Naive thymus-derived CD4-positive, alpha-beta T cell (primary cell): ENCODE measurements at regions of chr1 and their contacts with region 1.

Region 1: DNA sequence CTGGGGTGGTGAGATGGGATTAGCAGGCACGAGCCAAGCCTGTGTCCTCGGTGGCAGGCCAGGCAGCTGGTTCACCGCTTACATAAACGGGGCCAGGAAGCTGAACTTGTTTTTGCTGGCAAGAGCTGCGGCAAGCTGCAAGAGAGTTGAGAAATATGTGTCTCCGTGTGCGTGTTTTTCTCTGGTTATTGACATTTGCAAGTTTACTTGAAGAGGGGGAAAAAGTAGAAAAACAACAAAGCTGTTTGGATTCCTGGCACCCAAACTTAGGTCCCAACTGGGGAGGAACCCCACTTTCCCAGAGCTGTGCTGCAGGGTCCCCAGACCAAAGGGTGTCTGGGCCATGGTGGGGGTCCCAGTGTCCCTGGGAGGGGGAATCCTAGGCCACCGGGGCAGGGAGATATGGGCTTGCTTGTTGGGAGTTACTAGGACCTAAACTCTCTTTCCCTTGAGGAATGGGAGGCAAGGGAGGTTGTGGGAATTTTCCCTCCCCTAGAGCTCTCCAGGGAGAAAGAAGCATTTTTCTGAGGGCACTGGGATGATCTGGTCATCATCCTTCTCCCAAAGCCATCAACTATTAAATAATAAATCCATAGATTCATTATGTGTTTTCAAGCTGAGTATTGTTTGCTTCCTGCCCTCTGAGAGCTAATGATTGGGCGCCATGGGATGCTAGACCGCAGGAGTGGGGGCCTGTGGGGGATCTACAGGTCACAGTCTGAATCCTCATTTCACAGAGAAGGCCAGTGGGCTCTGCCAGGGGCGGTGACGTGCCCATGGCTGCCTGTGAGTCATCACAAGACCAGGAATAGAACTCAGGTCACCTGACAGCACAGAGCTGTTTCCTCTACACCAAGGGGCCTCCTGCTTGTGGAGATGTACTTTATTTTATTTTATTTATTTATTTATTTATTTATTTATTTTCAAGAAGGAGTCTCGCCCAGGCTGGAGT is 14.8 kb downstream of the IL6R start:
- DNase-seq: peak in 7 of 9 donors; percentile 40 to 66 (median 55)
- ATAC-seq: peak; percentile 84
- H3K4me3 ChIP-seq: peak overlapping the region; percentile 40
- H3K4me3 Mint-ChIP-seq: peak overlapping the region; percentile 70 to 86 (median 78)
- H3K27ac ChIP-seq: peak overlapping the region; percentile 76
- H3K27ac Mint-ChIP-seq: peak overlapping the region; percentile 76 to 97 (median 93)
- H3K4me1 ChIP-seq: peaks cover 0 to 78% of the 10 kb centered on the region in 2 donors
- H3K4me1 Mint-ChIP-seq: peaks cover 33 to 99% (median 89%) of the 10 kb centered on the region in 7 donors
- H3K27me3 ChIP-seq: no peaks in the 10 kb centered on the region
- H3K27me3 Mint-ChIP-seq: no peaks in the 10 kb centered on the region

Region 2: DNA sequence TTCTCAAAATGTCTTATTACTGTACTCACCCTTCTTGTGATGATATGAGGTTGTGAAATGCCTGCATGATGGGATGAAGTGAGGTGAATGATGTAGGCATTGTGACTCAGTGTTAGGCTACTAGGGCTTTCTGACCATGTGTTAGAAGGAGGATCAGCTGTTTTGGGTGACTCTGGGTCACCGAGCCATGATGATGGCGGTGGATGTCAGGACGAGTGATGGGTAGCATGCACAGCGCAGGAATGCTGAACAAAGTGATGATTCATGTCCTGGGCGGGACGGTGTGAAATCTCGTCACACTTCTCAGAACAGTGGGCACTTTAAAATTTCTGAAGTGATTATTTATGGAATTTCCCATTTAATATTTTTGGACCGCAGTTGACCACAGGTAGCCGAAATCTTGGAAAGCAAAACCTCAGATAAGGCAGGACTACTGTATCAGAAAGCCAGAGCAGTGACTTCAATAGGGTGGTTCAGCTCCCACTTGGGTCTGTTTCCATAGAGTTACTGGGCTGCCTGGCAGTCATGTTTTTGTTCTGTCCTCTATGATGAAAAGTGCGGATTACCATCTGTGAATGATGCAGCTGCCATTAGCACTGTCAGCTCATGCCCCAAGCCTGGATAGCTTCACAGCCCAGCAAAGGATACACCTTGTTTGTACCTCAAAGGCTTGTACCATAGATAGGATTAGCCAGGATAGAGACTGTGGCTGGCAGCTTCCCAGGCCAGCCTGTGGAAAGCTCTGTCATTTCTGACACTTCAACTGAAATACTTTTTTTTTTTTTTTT is 11.9 kb after region 1 on chr1:
- CTCF ChIA-PET with region 1: interaction called, 8 read pairs
- POLR2A ChIA-PET with region 1: interaction called, 12 read pairs
- intact Hi-C with region 1: no loop called
- DNase-seq: no peak
- ATAC-seq: peak; percentile 87
- H3K4me3 ChIP-seq: no peak overlapping the region
- H3K4me3 Mint-ChIP-seq: peak overlapping the region in 7 of 10 donors; percentile 3 to 44 (median 12)
- H3K27ac ChIP-seq: no peak overlapping the region
- H3K27ac Mint-ChIP-seq: peak overlapping the region; percentile 26 to 93 (median 84)
- H3K4me1 ChIP-seq: peaks cover 10 to 25% of the 10 kb centered on the region in 2 donors
- H3K4me1 Mint-ChIP-seq: peaks cover 26 to 67% (median 49%) of the 10 kb centered on the region in 7 donors
- H3K27me3 ChIP-seq: no peaks in the 10 kb centered on the region
- H3K27me3 Mint-ChIP-seq: no peaks in the 10 kb centered on the region

Region 3: GRCh38 chr1:154442006-154442740 is 22.3 kb after region 1 on chr1:
- CTCF ChIA-PET with region 1: interaction called, 14 read pairs
- POLR2A ChIA-PET with region 1: interaction called, 15 read pairs
- intact Hi-C with region 1: loop called in 1 of 2 experiments (anchors 2 kb)
- DNase-seq: no peak
- ATAC-seq: no peak
- H3K4me3 ChIP-seq: peak overlapping the region; percentile 36
- H3K4me3 Mint-ChIP-seq: peak overlapping the region in 9 of 10 donors; percentile 69 to 87 (median 76)
- H3K27ac ChIP-seq: peak overlapping the region; percentile 78
- H3K27ac Mint-ChIP-seq: peak overlapping the region in 8 of 9 donors; percentile 91 to 99 (median 96)
- H3K4me1 ChIP-seq: peaks cover 11 to 69% of the 10 kb centered on the region in 2 donors
- H3K4me1 Mint-ChIP-seq: peaks cover 55 to 82% (median 73%) of the 10 kb centered on the region in 7 donors
- H3K27me3 ChIP-seq: no peaks in the 10 kb centered on the region
- H3K27me3 Mint-ChIP-seq: no peaks in the 10 kb centered on the region

Region 4: DNA sequence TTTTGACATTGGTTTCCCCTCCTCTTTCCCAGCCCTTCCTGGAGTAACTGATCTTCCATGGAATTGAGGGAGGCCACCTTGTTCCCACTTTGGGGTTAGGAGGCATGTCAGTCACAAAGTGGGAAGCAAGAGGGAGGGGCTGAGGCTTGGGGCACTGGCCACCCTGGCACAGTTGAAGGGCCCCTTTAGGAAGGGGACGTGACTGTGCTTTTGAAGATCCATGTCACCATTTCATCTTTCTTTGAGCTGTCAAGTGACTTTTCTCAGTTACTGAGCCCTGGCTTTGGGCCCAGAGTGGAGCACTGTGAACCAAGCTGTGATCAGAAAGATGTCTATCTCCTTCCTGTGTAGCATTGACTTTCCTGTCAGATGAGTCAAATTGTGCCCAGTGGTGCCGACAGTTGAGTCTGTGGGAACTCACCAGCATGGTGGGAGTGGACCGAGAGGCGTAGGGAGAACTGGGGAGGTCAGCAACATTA is 43.7 kb after region 1 on chr1:
- CTCF ChIA-PET with region 1: interaction called, 3 read pairs
- POLR2A ChIA-PET with region 1: interaction called, 15 read pairs
- intact Hi-C with region 1: no loop called
- DNase-seq: peak in 8 of 9 donors; percentile 50 to 79 (median 70)
- ATAC-seq: peak; percentile 82
- H3K4me3 ChIP-seq: no peak overlapping the region
- H3K4me3 Mint-ChIP-seq: peak overlapping the region; percentile 58 to 96 (median 80)
- H3K27ac ChIP-seq: peak overlapping the region; percentile 78
- H3K27ac Mint-ChIP-seq: peak overlapping the region; percentile 86 to 96 (median 94)
- H3K4me1 ChIP-seq: peaks cover 38 to 78% of the 10 kb centered on the region in 2 donors
- H3K4me1 Mint-ChIP-seq: peaks cover 58 to 94% (median 81%) of the 10 kb centered on the region in 7 donors
- H3K27me3 ChIP-seq: no peaks in the 10 kb centered on the region
- H3K27me3 Mint-ChIP-seq: no peaks in the 10 kb centered on the region